ENCODE measurements at regions of chr1 and their contacts with region 1.

Region 1: DNA sequence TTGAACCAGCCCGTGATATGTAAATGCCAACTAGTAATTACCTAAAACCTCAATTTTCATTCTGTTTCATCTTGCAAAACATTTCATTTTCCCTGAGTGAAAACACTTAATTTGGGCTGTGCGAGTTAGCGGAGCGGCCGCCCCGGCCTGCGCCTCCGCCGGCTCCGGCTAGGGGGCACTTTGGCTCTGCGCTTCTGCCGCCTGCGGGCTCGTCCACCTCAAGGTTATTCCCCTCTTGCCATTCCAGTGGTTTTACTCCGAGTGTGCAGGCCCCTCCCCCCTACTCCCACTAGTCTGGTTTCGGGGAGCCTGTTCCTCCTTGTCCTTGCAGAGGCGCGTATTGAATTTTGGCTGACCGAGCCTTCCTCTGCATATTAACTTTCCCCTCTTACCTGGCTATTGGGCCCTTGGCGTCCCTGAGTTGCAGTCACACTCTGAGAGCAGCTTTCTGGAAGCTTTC is 55.6 kb downstream of the PEX14 start:
- DNase-seq: peak; percentile 86 to 90
- H3K4me3 ChIP-seq: no peak overlapping the region
- H3K27ac ChIP-seq: peak overlapping the region; percentile 73 to 88 (median 74)
- H3K4me1 ChIP-seq: peaks cover 29 to 35% of the 10 kb centered on the region in 2 donors
- H3K27me3 ChIP-seq: no peaks in the 10 kb centered on the region
- CTCF ChIP-seq: peak; percentile 61 to 92 (median 84)
- POLR2A ChIP-seq: no peak

Region 2: DNA sequence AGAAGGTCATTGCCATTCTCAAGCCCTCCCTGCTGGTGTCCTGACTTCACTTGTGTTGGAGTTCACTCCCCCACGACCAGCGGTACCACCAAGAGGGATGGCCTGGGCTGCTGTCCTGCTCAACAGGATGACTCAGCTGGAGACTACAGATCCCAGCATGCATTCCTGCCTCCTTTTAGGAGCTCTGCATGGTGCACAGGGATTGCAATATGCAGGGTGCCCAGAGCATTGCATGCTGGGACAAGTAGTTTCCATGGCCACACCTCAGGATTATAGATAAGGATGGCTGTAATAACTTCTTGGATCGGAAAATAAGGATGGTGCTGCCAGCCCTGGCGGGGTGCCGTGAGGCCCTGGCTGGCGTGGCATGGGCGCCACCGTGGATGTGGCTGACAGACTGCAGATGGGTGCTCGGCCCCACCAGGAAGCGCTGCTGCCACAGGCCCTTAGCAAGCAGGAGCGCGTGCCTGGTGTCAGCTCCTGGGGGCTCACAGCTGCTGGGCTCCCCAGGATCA is 116.1 kb after region 1 on chr1:
- intact Hi-C with region 1: loop called (anchors 10 kb)
- DNase-seq: no peak
- H3K4me3 ChIP-seq: no peak overlapping the region
- H3K27ac ChIP-seq: no peak overlapping the region
- H3K4me1 ChIP-seq: peaks cover 3% of the 10 kb centered on the region in 2 donors
- H3K27me3 ChIP-seq: no peaks in the 10 kb centered on the region
- CTCF ChIP-seq: no peak
- POLR2A ChIP-seq: no peak

Measured in thyroid gland (tissue), 4 donors.